Activated CD4-positive, alpha-beta memory T cell treated with anti-CD3 and anti-CD28 coated beads for 36 hours (primary cell): ENCODE measurements at regions of chr16 and their contacts with region 1.

Region 1: GRCh38 chr16:15592324-15592723 is 50.6 kb downstream of the MARF1 start:
- DNase-seq: peak; percentile 35
- H3K4me3 Mint-ChIP-seq: no peak overlapping the region
- H3K27ac Mint-ChIP-seq: no peak overlapping the region
- H3K4me1 Mint-ChIP-seq: peaks cover 39% of the 10 kb centered on the region
- H3K27me3 Mint-ChIP-seq: no peaks in the 10 kb centered on the region

Region 2: DNA sequence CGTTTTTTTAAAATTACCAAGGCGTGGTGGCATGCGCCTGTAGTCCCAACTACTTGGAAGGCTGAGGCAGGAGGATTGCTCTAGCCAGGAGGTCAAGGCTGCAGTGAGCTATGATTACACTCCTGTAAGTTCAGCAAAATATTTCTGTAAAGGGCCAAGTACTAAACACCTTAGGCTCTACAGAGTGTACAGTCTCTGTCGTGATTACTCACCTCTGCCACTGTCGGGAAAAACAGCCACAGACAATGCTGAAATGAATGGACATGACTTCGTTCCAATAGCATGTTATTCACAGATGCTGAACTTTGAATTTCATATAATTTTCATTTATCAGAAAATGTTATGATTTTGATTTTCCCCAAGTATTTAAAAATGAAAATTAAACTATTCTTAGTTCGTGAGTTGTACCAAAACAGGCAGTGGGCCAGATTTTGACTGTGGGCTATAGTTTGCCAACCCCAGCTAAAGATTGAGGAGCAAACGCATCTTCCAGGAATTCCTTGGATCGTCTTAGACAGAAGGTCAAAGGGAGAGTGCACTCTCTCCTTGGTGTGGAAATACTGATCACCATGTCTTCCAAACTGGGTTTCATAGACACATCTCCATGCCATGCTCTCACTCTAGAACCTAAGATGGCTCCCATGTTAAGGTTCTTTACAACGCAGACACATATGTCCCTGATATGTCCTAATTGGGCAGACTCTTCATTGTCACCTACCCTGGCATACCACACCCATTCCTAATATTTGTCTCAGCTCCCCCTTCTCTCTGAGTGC is 38.8 kb before region 1 on chr16:
- CTCF ChIA-PET with region 1: no interaction called
- POLR2A ChIA-PET with region 1: interaction called, 5 read pairs
- intact Hi-C with region 1: loop called (anchors 1 kb)
- DNase-seq: peak; percentile 77
- H3K4me3 Mint-ChIP-seq: no peak overlapping the region
- H3K27ac Mint-ChIP-seq: no peak overlapping the region
- H3K4me1 Mint-ChIP-seq: peaks cover 21% of the 10 kb centered on the region
- H3K27me3 Mint-ChIP-seq: no peaks in the 10 kb centered on the region

Region 3: DNA sequence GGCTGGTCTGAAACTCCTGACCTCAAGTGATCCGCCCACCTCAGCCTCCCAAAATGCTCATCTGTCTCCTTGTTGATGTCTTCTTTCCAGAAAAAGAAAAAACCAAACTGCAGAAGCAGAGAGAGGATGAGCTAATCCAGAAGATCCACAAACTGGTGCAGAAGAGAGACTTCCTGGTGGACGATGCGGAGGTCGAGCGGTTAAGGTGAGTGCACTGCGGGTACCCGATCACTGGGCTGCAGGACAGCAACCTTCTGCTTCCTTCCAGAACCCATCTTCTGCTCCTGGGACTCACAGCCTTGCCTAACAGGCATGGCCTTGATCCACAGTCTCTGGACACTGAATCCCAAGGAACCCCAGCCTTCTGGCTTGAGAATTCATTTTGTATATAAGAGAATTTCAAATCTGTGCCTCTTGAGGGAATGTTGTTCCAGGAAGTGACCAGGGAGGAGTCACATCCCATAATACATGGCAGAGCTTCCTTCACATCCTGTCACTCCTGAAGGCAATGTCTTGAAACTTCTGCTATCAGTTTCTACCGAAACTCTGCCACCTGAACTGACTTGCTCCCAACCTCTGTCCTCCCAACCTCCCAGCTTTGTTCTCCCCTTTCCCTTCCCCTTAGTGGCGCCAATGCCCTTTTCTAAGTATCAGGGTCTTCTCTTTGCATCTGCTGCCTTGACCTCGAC is 11.1 kb before region 1 on chr16:
- CTCF ChIA-PET with region 1: no interaction called
- POLR2A ChIA-PET with region 1: no interaction called
- intact Hi-C with region 1: no loop called
- DNase-seq: no peak
- H3K4me3 Mint-ChIP-seq: no peak overlapping the region
- H3K27ac Mint-ChIP-seq: no peak overlapping the region
- H3K4me1 Mint-ChIP-seq: no peaks in the 10 kb centered on the region
- H3K27me3 Mint-ChIP-seq: no peaks in the 10 kb centered on the region

Region 4: GRCh38 chr16:15636392-15636873 is 44.1 kb after region 1 on chr16:
- CTCF ChIA-PET with region 1: no interaction called
- POLR2A ChIA-PET with region 1: interaction called, 3 read pairs
- intact Hi-C with region 1: loop called (anchors 1 kb)
- DNase-seq: peak; percentile 15
- H3K4me3 Mint-ChIP-seq: peak overlapping the region; percentile 30
- H3K27ac Mint-ChIP-seq: peak overlapping the region; percentile 94
- H3K4me1 Mint-ChIP-seq: peaks cover 80% of the 10 kb centered on the region
- H3K27me3 Mint-ChIP-seq: no peaks in the 10 kb centered on the region

Region 5: GRCh38 chr16:15777533-15778203 is 185.3 kb after region 1 on chr16:
- CTCF ChIA-PET with region 1: no interaction called
- POLR2A ChIA-PET with region 1: no interaction called
- intact Hi-C with region 1: no loop called
- DNase-seq: peak; percentile 35
- H3K4me3 Mint-ChIP-seq: no peak overlapping the region
- H3K27ac Mint-ChIP-seq: no peak overlapping the region
- H3K4me1 Mint-ChIP-seq: no peaks in the 10 kb centered on the region
- H3K27me3 Mint-ChIP-seq: no peaks in the 10 kb centered on the region

Region 6: DNA sequence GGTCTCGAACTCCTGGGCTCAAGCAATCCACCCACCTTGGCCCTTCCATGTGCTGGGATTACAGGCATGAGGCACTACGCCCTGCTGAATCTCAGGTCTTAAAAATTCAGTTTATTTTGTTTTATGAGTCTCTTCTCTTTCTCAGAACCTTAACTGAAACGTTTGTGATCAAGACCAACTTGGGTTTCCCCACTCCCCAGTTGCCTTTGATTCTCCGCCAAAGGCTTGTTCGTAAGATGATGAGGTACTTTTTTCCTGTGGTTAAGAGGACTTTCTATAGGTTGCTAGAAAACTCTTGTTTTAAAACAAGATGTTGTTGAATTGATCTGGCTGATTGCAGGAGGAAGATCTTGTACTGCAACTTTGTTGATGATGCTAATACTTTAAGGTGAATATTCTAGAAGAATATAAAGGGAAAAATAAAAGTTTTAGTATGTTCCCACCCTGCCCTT is 368.8 kb after region 1 on chr16:
- CTCF ChIA-PET with region 1: no interaction called
- POLR2A ChIA-PET with region 1: no interaction called
- intact Hi-C with region 1: loop called (anchors 5 kb)
- DNase-seq: peak; percentile 86
- H3K4me3 Mint-ChIP-seq: peak overlapping the region; percentile 78
- H3K27ac Mint-ChIP-seq: peak overlapping the region; percentile 100
- H3K4me1 Mint-ChIP-seq: peaks cover 84% of the 10 kb centered on the region
- H3K27me3 Mint-ChIP-seq: no peaks in the 10 kb centered on the region